PC-9 (cell line): ENCODE measurements at regions of chr1 and their contacts with region 1.

Region 1: GRCh38 chr1:107529502-107530149 is 388.8 kb downstream of the NTNG1 start:
- DNase-seq: peak in 1 of 2 experiments; percentile 56
- H3K4me3 ChIP-seq: no peak overlapping the region
- H3K27ac ChIP-seq: no peak overlapping the region
- H3K4me1 ChIP-seq: peaks cover 5% of the 10 kb centered on the region
- H3K27me3 ChIP-seq: no peaks in the 10 kb centered on the region
- CTCF ChIP-seq: peak; percentile 93

Region 2: GRCh38 chr1:107299521-107299920 is 230.1 kb before region 1 on chr1:
- CTCF ChIA-PET with region 1: no interaction called
- POLR2A ChIA-PET with region 1: no interaction called
- intact Hi-C with region 1: no loop called
- DNase-seq: no peak
- H3K4me3 ChIP-seq: no peak overlapping the region
- H3K27ac ChIP-seq: no peak overlapping the region
- H3K4me1 ChIP-seq: no peaks in the 10 kb centered on the region
- H3K27me3 ChIP-seq: no peaks in the 10 kb centered on the region
- CTCF ChIP-seq: no peak

Region 3: DNA sequence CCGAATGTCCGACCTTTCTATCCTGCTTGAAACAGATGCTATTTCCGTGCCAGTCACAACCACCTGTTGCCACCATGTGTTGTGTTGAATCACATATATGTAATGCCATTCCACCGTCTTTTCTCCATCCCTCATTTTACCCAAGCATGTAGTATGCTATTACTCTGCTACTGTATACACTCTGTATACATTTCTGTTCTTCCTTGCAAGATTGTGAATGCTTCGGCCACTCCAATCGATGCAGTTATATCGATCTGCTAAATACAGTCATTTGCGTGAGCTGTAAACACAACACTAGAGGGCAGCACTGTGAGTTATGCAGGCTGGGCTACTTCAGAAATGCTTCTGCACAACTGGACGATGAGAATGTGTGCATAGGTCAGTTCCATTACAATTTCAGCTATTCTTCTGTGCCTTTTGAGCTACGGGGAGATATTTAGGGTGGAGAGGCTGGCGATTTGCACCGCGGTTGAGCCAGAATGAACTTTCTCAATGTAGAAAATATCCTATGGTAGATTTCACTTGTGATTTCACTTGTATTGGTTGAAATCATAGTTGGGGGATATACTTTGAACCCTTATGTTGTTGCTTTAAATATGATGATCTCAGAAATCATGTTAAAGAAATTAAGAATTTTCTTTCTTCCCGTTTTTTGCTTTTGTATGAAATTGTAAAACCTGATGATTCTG is 98.9 kb before region 1 on chr1:
- CTCF ChIA-PET with region 1: interaction called, 3 read pairs
- POLR2A ChIA-PET with region 1: no interaction called
- intact Hi-C with region 1: loop called (anchors 10 kb)
- DNase-seq: peak; percentile 7 to 59
- H3K4me3 ChIP-seq: no peak overlapping the region
- H3K27ac ChIP-seq: no peak overlapping the region
- H3K4me1 ChIP-seq: no peaks in the 10 kb centered on the region
- H3K27me3 ChIP-seq: no peaks in the 10 kb centered on the region
- CTCF ChIP-seq: peak; percentile 93